B cell (primary cell): ENCODE measurements at regions of chr9 and their contacts with region 1.

Region 1: GRCh38 chr9:128034821-128035764 is 32.0 kb downstream of the NAIF1 start:
- DNase-seq: peak; percentile 88
- ATAC-seq: peak; percentile 82
- H3K4me3 ChIP-seq: no peak overlapping the region
- H3K4me3 Mint-ChIP-seq: no peak overlapping the region
- H3K27ac ChIP-seq: no peak overlapping the region
- H3K27ac Mint-ChIP-seq: peak overlapping the region; percentile 71
- H3K4me1 ChIP-seq: peaks cover 29 to 46% of the 10 kb centered on the region in 2 donors
- H3K4me1 Mint-ChIP-seq: peaks cover 33% of the 10 kb centered on the region
- H3K27me3 ChIP-seq: no peaks in the 10 kb centered on the region
- H3K27me3 Mint-ChIP-seq: no peaks in the 10 kb centered on the region
- CTCF ChIP-seq: peak; percentile 93

Region 2: GRCh38 chr9:127955294-127956035 is 79.6 kb before region 1 on chr9:
- CTCF ChIA-PET with region 1: interaction called, 310 read pairs
- POLR2A ChIA-PET with region 1: interaction called, 6 read pairs
- intact Hi-C with region 1: loop called (anchors 1 kb)
- DNase-seq: peak; percentile 77
- ATAC-seq: peak; percentile 97
- H3K4me3 ChIP-seq: no peak overlapping the region
- H3K4me3 Mint-ChIP-seq: peak overlapping the region; percentile 16
- H3K27ac ChIP-seq: peak overlapping the region in 1 of 2 donors; percentile 46
- H3K27ac Mint-ChIP-seq: peak overlapping the region; percentile 80
- H3K4me1 ChIP-seq: peaks cover 8 to 30% of the 10 kb centered on the region in 2 donors
- H3K4me1 Mint-ChIP-seq: peaks cover 53% of the 10 kb centered on the region
- H3K27me3 ChIP-seq: no peaks in the 10 kb centered on the region
- H3K27me3 Mint-ChIP-seq: no peaks in the 10 kb centered on the region
- CTCF ChIP-seq: peak; percentile 63

Region 3: DNA sequence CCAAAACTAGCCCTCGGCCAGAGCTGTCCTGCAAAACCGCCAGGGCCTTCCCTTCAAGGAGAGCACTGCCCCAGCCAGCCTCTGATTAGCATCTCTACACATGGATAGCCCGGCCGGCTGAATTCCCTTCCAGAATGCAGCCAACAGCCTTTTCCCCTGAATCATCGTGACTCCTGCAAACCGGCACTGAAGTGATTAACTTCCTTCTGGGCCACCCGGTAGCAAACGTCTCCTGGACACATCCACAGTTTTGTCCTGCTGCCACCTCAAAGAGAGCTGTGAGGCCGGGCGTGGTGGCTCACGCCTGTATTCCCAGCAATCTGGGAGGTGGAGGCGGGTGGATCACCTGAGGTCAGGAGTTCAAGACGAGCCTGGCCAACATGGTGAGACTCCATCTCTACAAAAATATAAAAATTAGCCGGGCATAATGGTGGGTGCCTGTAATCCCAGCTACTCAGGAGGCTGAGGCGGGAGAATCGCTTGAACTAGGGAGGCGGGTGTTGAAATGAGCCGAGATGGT is 33.3 kb before region 1 on chr9:
- CTCF ChIA-PET with region 1: interaction called, 11 read pairs
- POLR2A ChIA-PET with region 1: interaction called, 4 read pairs
- intact Hi-C with region 1: loop called (anchors 2 kb)
- DNase-seq: no peak
- ATAC-seq: no peak
- H3K4me3 ChIP-seq: no peak overlapping the region
- H3K4me3 Mint-ChIP-seq: no peak overlapping the region
- H3K27ac ChIP-seq: no peak overlapping the region
- H3K27ac Mint-ChIP-seq: no peak overlapping the region
- H3K4me1 ChIP-seq: peaks cover 33 to 39% of the 10 kb centered on the region in 2 donors
- H3K4me1 Mint-ChIP-seq: peaks cover 30% of the 10 kb centered on the region
- H3K27me3 ChIP-seq: no peaks in the 10 kb centered on the region
- H3K27me3 Mint-ChIP-seq: no peaks in the 10 kb centered on the region
- CTCF ChIP-seq: no peak

Region 4: GRCh38 chr9:128062846-128063401 is 27.8 kb after region 1 on chr9:
- CTCF ChIA-PET with region 1: interaction called, 13 read pairs
- POLR2A ChIA-PET with region 1: no interaction called
- intact Hi-C with region 1: no loop called
- DNase-seq: peak; percentile 40
- ATAC-seq: no peak
- H3K4me3 ChIP-seq: peak overlapping the region in 1 of 5 experiments; percentile 20
- H3K4me3 Mint-ChIP-seq: peak overlapping the region; percentile 79
- H3K27ac ChIP-seq: peak overlapping the region; percentile 66 to 74
- H3K27ac Mint-ChIP-seq: peak overlapping the region; percentile 87
- H3K4me1 ChIP-seq: peaks cover 54 to 66% of the 10 kb centered on the region in 2 donors
- H3K4me1 Mint-ChIP-seq: peaks cover 49% of the 10 kb centered on the region
- H3K27me3 ChIP-seq: no peaks in the 10 kb centered on the region
- H3K27me3 Mint-ChIP-seq: no peaks in the 10 kb centered on the region
- CTCF ChIP-seq: no peak